ENCODE measurements at regions of chr12 and their contacts with region 1.

Region 1: DNA sequence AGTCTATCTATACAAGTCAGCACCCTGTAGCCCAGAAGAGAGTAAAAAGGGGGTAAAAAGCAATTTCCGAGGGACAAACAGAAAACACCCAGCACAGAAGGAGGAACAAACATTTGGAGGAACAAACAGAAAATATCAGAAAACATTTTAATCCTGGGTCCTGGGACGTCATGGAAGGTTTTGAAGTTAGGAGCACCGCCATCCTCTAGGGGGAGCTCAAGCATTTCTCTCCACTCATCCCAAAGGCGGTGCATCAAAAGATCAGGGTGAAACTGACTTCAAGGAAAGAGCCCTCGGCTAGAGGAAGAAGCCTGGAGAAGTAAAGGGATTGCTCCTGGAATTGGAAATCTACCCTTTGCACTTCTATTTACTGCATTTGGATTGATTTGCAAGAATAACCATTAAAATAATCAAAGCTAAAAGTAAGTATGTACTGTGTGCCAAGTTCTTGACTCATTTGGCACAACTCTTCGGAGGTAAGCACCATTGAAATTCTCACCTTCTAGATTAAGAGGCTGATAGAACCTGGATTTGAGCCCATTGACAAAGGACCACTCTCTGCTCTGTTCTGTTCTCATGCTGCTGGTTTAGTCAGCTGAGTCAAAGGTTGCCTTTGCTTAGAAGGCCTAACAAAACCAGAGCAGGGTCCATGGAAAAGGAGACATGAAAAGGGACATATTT is 17.2 kb upstream of the POC1B start:
- DNase-seq: peak in 7 of 10 donors; percentile 31 to 87 (median 60)

Region 2: DNA sequence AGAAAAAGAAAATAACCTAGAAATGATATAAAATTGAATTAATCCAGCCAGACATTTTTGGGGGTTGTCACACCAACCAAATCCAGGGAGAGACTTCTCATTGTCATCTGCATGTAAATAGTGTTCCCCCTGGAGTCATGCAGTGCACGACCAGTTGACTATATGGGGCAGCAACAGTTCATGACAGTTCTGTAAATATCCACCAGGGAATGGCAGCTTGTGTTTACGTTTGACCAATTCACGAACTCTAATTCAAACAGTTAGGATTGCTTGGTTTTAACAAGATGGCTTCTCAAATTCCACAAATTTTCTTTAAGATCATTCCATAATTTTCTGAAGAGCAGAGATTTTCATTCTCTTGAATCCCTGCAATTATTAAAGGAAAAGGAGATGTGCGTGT is 147.3 kb before region 1 on chr12:
- intact Hi-C with region 1: no loop called
- DNase-seq: no peak

Region 3: GRCh38 chr12:89709157-89709994 is 166.3 kb after region 1 on chr12:
- intact Hi-C with region 1: loop called (anchors 5 kb)
- DNase-seq: peak; percentile 94 to 99 (median 97)

Region 4: GRCh38 chr12:90102957-90103652 is 560.1 kb after region 1 on chr12:
- intact Hi-C with region 1: loop called (anchors 5 kb)
- DNase-seq: no peak

Region 5: DNA sequence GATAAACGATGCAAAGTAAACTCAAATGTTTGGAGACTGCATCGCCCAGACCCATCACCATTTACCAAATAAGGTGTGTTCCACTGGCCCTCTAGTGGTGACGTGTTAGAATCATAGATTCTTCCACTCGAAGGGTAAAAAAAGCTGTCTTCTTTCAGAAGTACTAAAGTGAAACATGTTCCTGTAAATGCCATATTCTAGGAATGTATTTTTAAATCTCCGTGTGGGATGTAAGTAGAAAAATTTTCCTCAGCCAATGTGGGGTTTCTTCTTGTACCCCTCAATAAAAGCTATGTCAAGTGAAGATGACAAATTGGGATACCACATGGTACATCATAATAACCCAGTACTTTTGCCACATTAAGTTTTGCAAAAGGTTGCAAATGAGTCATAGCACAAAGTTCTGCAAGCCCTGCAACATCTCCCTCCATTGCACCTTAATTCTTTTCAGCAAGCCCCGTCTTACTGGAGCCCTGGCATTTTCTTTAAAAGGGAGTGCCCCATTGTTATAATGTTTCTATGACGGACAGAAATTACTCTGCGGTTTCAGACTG is 1311.2 kb after region 1 on chr12:
- intact Hi-C with region 1: loop called (anchors 2 kb)
- DNase-seq: peak in 1 of 10 donors; percentile 11

Region 6: GRCh38 chr12:90938451-90938850 is 1395.4 kb after region 1 on chr12:
- intact Hi-C with region 1: loop called (anchors 10 kb)
- DNase-seq: no peak

Measured in posterior cingulate gyrus (tissue), 11 donors.